ENCODE measurements at regions of chr15 and their contacts with region 1.

Region 1: DNA sequence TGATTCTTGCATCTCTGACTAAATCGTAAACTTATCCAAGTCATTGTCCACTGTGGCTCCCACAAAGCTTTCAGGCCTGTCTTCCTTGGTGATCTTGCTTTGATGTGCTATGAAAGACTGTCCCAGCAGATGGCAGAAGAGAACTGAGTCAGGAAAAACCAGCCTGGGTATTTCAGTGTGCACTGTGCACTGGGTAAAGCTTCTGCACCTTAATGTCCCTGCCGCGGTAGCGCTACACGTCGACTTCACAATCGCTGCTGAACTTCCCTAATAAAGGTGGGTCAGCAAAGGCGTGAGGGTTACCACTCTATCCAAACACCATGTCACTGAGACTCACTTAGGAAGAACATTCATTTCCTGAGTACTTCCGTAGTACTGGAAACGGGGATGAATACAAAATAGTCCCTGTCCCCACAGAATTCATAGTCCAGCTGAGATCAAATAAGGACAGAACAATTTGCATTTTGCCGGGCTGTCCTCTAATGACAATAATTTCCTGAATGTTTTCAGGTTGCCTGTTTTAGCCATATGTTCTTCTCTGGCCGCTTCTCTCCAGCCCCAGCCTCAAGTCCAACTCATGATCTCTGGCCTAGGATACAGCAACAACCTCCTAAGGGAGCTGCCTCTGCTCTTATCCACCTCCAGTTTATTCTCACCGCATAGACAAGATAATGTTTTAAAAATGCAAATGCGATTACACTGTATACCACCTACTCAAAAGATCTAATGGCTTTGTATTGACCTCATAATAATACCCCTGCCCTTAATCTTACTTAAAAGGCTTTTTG is 83.6 kb upstream of the AKAP13 start:
- DNase-seq: peak; percentile 87
- ATAC-seq: peak; percentile 99
- H3K4me3 ChIP-seq: peak overlapping the region in 3 of 5 experiments; percentile 34 to 50 (median 40)
- H3K4me3 Mint-ChIP-seq: peak overlapping the region; percentile 85
- H3K27ac ChIP-seq: no peak overlapping the region
- H3K27ac Mint-ChIP-seq: peak overlapping the region; percentile 81
- H3K4me1 ChIP-seq: peaks cover 8 to 17% of the 10 kb centered on the region in 2 donors
- H3K4me1 Mint-ChIP-seq: peaks cover 20% of the 10 kb centered on the region
- H3K27me3 ChIP-seq: no peaks in the 10 kb centered on the region
- H3K27me3 Mint-ChIP-seq: no peaks in the 10 kb centered on the region
- CTCF ChIP-seq: peak; percentile 84

Region 2: DNA sequence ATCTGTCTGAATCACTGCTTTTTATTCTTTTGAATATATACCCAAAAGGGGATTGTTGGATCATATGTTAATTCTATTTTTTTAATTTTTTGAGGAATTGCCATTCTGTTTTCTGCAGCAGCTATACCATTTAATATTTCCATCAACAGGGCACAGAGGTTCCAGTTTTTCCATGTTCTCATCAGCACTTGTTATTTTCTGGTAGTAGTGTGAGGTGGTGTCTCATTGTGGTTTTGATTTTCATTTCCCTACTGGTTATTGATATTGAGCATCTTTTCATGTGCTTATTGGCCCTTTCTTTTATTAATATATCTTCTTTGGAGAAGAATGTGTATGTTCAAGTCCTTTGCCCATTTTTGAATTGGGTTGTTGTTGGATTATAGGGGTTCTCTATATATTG is 247.0 kb before region 1 on chr15:
- CTCF ChIA-PET with region 1: no interaction called
- POLR2A ChIA-PET with region 1: no interaction called
- intact Hi-C with region 1: no loop called
- DNase-seq: no peak
- ATAC-seq: no peak
- H3K4me3 ChIP-seq: no peak overlapping the region
- H3K4me3 Mint-ChIP-seq: no peak overlapping the region
- H3K27ac ChIP-seq: no peak overlapping the region
- H3K27ac Mint-ChIP-seq: no peak overlapping the region
- H3K4me1 ChIP-seq: peaks cover 3 to 13% of the 10 kb centered on the region in 2 donors
- H3K4me1 Mint-ChIP-seq: peaks cover 40% of the 10 kb centered on the region
- H3K27me3 ChIP-seq: no peaks in the 10 kb centered on the region
- H3K27me3 Mint-ChIP-seq: no peaks in the 10 kb centered on the region
- CTCF ChIP-seq: no peak

Region 3: DNA sequence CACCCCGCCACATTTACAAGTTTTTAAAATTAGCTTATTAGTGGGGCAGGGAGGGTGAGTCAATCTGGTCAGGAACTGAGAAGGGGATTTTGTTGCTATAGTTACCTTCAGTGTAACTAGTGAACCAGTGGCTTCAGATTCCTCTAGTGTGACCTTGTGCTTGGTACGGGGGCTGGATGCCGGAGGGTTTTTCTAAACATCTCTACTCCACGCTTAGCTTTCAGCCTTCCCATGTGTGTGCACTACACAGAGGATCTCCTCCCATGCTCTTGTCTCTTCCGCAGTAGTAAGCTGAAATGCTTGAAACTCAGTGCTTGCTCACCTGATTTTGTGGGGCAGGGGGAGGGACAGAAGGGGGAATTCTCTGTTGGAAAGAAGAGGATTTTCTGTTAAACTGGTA is 15.7 kb after region 1 on chr15:
- CTCF ChIA-PET with region 1: interaction called, 132 read pairs
- POLR2A ChIA-PET with region 1: interaction called, 8 read pairs
- intact Hi-C with region 1: loop called (anchors 1 kb)
- DNase-seq: peak; percentile 86
- ATAC-seq: peak; percentile 84
- H3K4me3 ChIP-seq: peak overlapping the region in 4 of 5 experiments; percentile 28 to 59 (median 51)
- H3K4me3 Mint-ChIP-seq: peak overlapping the region; percentile 89
- H3K27ac ChIP-seq: peak overlapping the region; percentile 87 to 97
- H3K27ac Mint-ChIP-seq: peak overlapping the region; percentile 95
- H3K4me1 ChIP-seq: peaks cover 56 to 63% of the 10 kb centered on the region in 2 donors
- H3K4me1 Mint-ChIP-seq: peaks cover 87% of the 10 kb centered on the region
- H3K27me3 ChIP-seq: no peaks in the 10 kb centered on the region
- H3K27me3 Mint-ChIP-seq: no peaks in the 10 kb centered on the region
- CTCF ChIP-seq: no peak

Region 4: GRCh38 chr15:85380217-85380811 is 83.5 kb after region 1 on chr15 and contains the start of gene AKAP13:
- CTCF ChIA-PET with region 1: interaction called, 9 read pairs
- POLR2A ChIA-PET with region 1: interaction called, 9 read pairs
- intact Hi-C with region 1: loop called (anchors 1 kb)
- DNase-seq: peak; percentile 97
- ATAC-seq: peak; percentile 78
- H3K4me3 ChIP-seq: peak within 1 kb of the TSS; percentile 65 to 90 (median 69)
- H3K4me3 Mint-ChIP-seq: peak within 1 kb of the TSS; percentile 86
- H3K27ac ChIP-seq: peak within 1 kb of the TSS; percentile 79 to 85
- H3K27ac Mint-ChIP-seq: peak within 1 kb of the TSS; percentile 90
- H3K4me1 ChIP-seq: peaks cover 35 to 42% of the 10 kb centered on the region in 2 donors
- H3K4me1 Mint-ChIP-seq: peaks cover 44% of the 10 kb centered on the region
- H3K27me3 ChIP-seq: peaks cover 0 to 4% (median 0%) of the 10 kb centered on the region in 4 experiments
- H3K27me3 Mint-ChIP-seq: peaks cover 4% of the 10 kb centered on the region
- CTCF ChIP-seq: no peak
- total RNA-seq, gene AKAP13: 358 and 380 TPM in 2 replicates

Region 5: GRCh38 chr15:85407804-85408746 is 111.3 kb after region 1 on chr15:
- CTCF ChIA-PET with region 1: interaction called, 401 read pairs
- POLR2A ChIA-PET with region 1: interaction called, 3 read pairs
- intact Hi-C with region 1: no loop called
- DNase-seq: peak; percentile 81
- ATAC-seq: peak; percentile 65
- H3K4me3 ChIP-seq: peak overlapping the region in 4 of 5 experiments; percentile 2 to 57 (median 35)
- H3K4me3 Mint-ChIP-seq: peak overlapping the region; percentile 84
- H3K27ac ChIP-seq: peak overlapping the region; percentile 83 to 88
- H3K27ac Mint-ChIP-seq: peak overlapping the region; percentile 96
- H3K4me1 ChIP-seq: peaks cover 87 to 90% of the 10 kb centered on the region in 2 donors
- H3K4me1 Mint-ChIP-seq: peaks cover 80% of the 10 kb centered on the region
- H3K27me3 ChIP-seq: no peaks in the 10 kb centered on the region
- H3K27me3 Mint-ChIP-seq: no peaks in the 10 kb centered on the region
- CTCF ChIP-seq: no peak

Region 6: DNA sequence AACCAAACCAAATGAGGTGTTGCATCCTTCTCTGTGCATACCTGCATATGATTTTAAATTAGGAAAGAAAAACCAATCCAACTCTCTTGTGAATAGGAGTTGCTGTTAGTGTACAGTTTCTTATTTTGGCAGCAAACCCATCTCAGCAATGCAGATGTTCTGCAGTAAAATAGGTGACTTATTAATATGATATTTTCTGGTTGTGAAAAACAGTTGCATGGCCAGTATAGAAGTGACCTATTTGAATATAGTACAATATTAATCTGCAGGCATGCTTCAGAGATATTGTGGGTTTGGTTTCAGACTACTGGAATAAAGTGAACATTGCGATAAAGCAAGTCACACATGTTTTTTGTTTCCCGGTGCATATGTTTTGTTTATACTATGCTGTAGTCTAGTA is 125.8 kb after region 1 on chr15:
- CTCF ChIA-PET with region 1: interaction called, 401 read pairs
- POLR2A ChIA-PET with region 1: no interaction called
- intact Hi-C with region 1: no loop called
- DNase-seq: no peak
- ATAC-seq: no peak
- H3K4me3 ChIP-seq: no peak overlapping the region
- H3K4me3 Mint-ChIP-seq: no peak overlapping the region
- H3K27ac ChIP-seq: no peak overlapping the region
- H3K27ac Mint-ChIP-seq: no peak overlapping the region
- H3K4me1 ChIP-seq: peaks cover 37 to 58% of the 10 kb centered on the region in 2 donors
- H3K4me1 Mint-ChIP-seq: peaks cover 77% of the 10 kb centered on the region
- H3K27me3 ChIP-seq: no peaks in the 10 kb centered on the region
- H3K27me3 Mint-ChIP-seq: no peaks in the 10 kb centered on the region
- CTCF ChIP-seq: no peak

Region 7: GRCh38 chr15:85485956-85486567 is 189.3 kb after region 1 on chr15:
- CTCF ChIA-PET with region 1: interaction called, 21 read pairs
- POLR2A ChIA-PET with region 1: no interaction called
- intact Hi-C with region 1: loop called (anchors 1 kb)
- DNase-seq: peak; percentile 83
- ATAC-seq: peak; percentile 91
- H3K4me3 ChIP-seq: no peak overlapping the region
- H3K4me3 Mint-ChIP-seq: no peak overlapping the region
- H3K27ac ChIP-seq: no peak overlapping the region
- H3K27ac Mint-ChIP-seq: peak overlapping the region; percentile 54
- H3K4me1 ChIP-seq: peaks cover 41 to 47% of the 10 kb centered on the region in 2 donors
- H3K4me1 Mint-ChIP-seq: peaks cover 74% of the 10 kb centered on the region
- H3K27me3 ChIP-seq: no peaks in the 10 kb centered on the region
- H3K27me3 Mint-ChIP-seq: no peaks in the 10 kb centered on the region
- CTCF ChIP-seq: peak; percentile 95